ENCODE measurements at regions of chr6 and their contacts with region 1.

Region 1: GRCh38 chr6:107102414-107102990 is 12.8 kb downstream of the BEND3 start:
- DNase-seq: no peak
- H3K4me3 ChIP-seq: no peak overlapping the region
- H3K27ac ChIP-seq: no peak overlapping the region
- H3K4me1 ChIP-seq: no peaks in the 10 kb centered on the region
- H3K27me3 ChIP-seq: no peaks in the 10 kb centered on the region
- CTCF ChIP-seq: no peak

Region 2: GRCh38 chr6:106421496-106421895 is 681.0 kb before region 1 on chr6:
- CTCF ChIA-PET with region 1: no interaction called
- dilution Hi-C with region 1: no loop called
- in situ Hi-C with region 1: no loop called
- intact Hi-C with region 1: no loop called
- DNase-seq: no peak
- H3K4me3 ChIP-seq: no peak overlapping the region
- H3K27ac ChIP-seq: no peak overlapping the region
- H3K4me1 ChIP-seq: peaks cover 22% of the 10 kb centered on the region
- H3K27me3 ChIP-seq: no peaks in the 10 kb centered on the region
- CTCF ChIP-seq: no peak

Region 3: GRCh38 chr6:107045826-107046613 is 56.5 kb before region 1 on chr6:
- CTCF ChIA-PET with region 1: no interaction called
- dilution Hi-C with region 1: loop called (anchors 5 kb)
- in situ Hi-C with region 1: no loop called
- intact Hi-C with region 1: no loop called
- DNase-seq: no peak
- H3K4me3 ChIP-seq: no peak overlapping the region
- H3K27ac ChIP-seq: no peak overlapping the region
- H3K4me1 ChIP-seq: no peaks in the 10 kb centered on the region
- H3K27me3 ChIP-seq: no peaks in the 10 kb centered on the region
- CTCF ChIP-seq: no peak

Region 4: DNA sequence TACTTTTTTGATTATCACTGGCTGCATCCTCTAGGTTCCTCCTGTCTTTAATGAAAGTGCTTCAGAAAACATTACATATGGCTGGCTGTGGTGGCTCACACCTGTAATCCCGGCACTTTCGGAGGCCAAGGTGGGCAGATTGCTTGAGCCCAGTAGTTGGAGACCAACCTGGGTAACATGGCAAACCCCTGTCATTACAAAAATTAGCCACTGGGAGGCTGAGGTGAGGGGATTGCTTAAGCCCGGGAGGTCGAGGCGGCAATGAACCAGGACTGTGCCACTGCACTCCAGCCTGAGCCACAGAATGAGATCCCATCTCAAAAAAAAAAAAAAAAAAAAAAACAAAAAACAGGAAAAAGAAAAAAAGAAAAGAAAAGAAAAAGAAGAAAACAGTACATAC is 22.5 kb before region 1 on chr6:
- CTCF ChIA-PET with region 1: no interaction called
- dilution Hi-C with region 1: no loop called
- in situ Hi-C with region 1: no loop called
- intact Hi-C with region 1: no loop called
- DNase-seq: no peak
- H3K4me3 ChIP-seq: no peak overlapping the region
- H3K27ac ChIP-seq: no peak overlapping the region
- H3K4me1 ChIP-seq: peaks cover 8% of the 10 kb centered on the region
- H3K27me3 ChIP-seq: no peaks in the 10 kb centered on the region
- CTCF ChIP-seq: peak in 1 of 2 donors; percentile 35

Region 5: GRCh38 chr6:107209406-107210305 is 107.2 kb after region 1 on chr6:
- CTCF ChIA-PET with region 1: no interaction called
- dilution Hi-C with region 1: loop called (anchors 5 kb)
- in situ Hi-C with region 1: no loop called
- intact Hi-C with region 1: no loop called
- DNase-seq: no peak
- H3K4me3 ChIP-seq: no peak overlapping the region
- H3K27ac ChIP-seq: no peak overlapping the region
- H3K4me1 ChIP-seq: peaks cover 2% of the 10 kb centered on the region
- H3K27me3 ChIP-seq: no peaks in the 10 kb centered on the region
- CTCF ChIP-seq: no peak

Measured in mammary epithelial cell (primary cell).